ENCODE measurements at regions of chr11 and their contacts with region 1.

Region 1: DNA sequence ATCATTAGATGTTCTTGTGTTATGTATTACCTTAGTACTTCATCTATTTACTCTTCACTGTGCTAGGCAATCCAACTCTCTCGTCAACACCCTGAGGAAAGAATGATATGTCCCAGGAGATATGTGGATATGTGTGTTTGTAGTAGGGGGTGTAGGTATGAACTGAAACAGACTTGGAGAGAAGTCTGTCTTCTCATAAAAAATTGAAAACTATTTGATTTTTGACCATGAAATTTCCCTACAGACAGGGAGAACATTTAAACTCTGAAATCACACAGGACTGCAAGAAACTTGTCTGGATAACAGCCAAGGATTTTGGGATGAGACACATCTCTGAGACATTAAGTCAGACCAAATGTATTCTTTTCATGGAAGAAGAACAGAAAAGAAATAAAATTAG is 967.0 kb upstream of the FAT3 start:
- DNase-seq: no peak
- ATAC-seq: no peak

Region 2: GRCh38 chr11:90947930-90948329 is 309.7 kb before region 1 on chr11:
- intact Hi-C with region 1: loop called in 1 of 2 experiments (anchors 10 kb)
- DNase-seq: no peak
- ATAC-seq: no peak